CD4-positive, alpha-beta memory T cell (primary cell): ENCODE measurements at regions of chr6 and their contacts with region 1.

Region 1: GRCh38 chr6:133952815-133953633 is at the start of gene TBPL1:
- DNase-seq: peak; percentile 83 to 92 (median 84)
- H3K4me3 ChIP-seq: peak within 1 kb of the TSS; percentile 85 to 97
- H3K4me3 Mint-ChIP-seq: peak within 1 kb of the TSS; percentile 89 to 99 (median 97)
- H3K27ac ChIP-seq: peak within 1 kb of the TSS; percentile 65
- H3K27ac Mint-ChIP-seq: peak within 1 kb of the TSS; percentile 92 to 98 (median 96)
- H3K4me1 ChIP-seq: peaks cover 50% of the 10 kb centered on the region
- H3K4me1 Mint-ChIP-seq: peaks cover 37 to 55% (median 42%) of the 10 kb centered on the region in 4 donors
- H3K27me3 ChIP-seq: no peaks in the 10 kb centered on the region
- H3K27me3 Mint-ChIP-seq: no peaks in the 10 kb centered on the region
- total RNA-seq, gene TBPL1: 34.8 to 39.2 TPM

Region 2: DNA sequence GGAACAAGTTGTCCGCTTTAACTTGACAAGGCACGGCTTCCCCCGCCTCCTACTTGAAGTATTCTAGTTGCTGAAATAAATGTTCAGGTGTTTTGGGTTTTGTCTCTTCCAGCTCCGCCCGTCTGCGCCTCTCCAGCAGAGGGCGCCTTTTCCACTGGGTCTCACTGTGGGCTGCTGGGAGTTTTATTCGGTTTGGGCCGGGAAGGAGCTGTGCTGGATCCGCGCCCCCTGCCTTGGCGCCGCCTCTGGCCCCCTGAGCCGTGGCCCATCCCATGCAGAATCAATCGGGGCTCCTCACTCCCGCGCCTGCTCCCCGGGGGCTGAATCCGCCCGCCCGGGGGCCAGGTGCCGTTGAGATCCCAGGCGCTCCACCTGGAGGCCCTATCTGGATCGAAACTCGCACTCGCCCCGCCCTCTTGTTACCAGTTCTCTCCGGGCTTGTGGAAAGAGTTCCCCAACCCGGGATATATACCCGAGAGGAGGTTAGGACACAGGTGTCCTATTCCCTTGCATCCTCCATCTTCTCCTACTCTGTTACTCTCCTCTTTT is 115.1 kb before region 1 on chr6:
- CTCF ChIA-PET with region 1: no interaction called
- POLR2A ChIA-PET with region 1: no interaction called
- intact Hi-C with region 1: no loop called
- DNase-seq: peak in 4 of 5 donors; percentile 45 to 55 (median 50)
- H3K4me3 ChIP-seq: peak overlapping the region in 1 of 2 donors; percentile 39
- H3K4me3 Mint-ChIP-seq: peak overlapping the region; percentile 23 to 86 (median 68)
- H3K27ac ChIP-seq: no peak overlapping the region
- H3K27ac Mint-ChIP-seq: no peak overlapping the region
- H3K4me1 ChIP-seq: no peaks in the 10 kb centered on the region
- H3K4me1 Mint-ChIP-seq: peaks cover 0 to 8% (median 5%) of the 10 kb centered on the region in 4 donors
- H3K27me3 ChIP-seq: no peaks in the 10 kb centered on the region
- H3K27me3 Mint-ChIP-seq: peaks cover 11 to 20% of the 10 kb centered on the region in 2 donors

Region 3: DNA sequence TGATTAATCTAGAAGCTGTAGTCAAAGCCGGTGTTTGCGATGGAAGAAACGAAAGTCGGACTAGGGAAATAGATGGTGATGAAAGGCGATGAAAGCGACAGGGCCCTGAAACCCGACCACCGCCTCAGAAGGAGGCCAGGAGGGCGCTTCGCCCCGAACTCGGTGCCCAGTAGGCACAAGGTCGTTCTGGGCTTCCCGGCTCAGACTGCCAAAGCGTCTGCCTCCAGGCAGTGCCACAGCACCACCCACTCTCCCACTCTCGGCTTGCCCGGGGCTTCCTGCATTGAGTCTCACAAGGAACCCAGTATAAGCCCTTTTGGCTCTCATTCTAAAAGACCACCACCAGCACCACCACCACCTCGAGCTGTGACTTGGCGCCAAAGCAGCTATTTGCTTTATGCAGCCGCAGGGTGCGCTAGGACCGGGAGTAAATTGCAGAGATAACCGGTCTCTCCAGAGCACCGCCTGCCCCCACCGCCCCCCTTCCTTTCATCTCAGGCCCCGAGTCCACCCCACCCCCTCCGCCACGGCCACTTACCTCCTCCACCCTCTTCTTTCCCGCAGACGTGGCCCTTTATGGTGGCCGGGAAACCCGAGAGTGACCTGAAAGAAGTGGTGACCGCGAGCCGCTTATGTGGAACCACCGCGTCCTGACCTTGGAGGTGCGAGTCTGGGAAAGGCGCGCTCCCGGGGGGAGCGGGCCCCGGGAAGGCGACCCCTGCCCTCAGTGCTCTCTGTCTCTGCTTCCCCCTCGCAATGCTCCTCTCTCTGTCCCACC is 61.7 kb before region 1 on chr6:
- CTCF ChIA-PET with region 1: no interaction called
- POLR2A ChIA-PET with region 1: no interaction called
- intact Hi-C with region 1: no loop called
- DNase-seq: peak in 3 of 5 donors; percentile 9 to 18 (median 15)
- H3K4me3 ChIP-seq: peak overlapping the region; percentile 12 to 39
- H3K4me3 Mint-ChIP-seq: peak overlapping the region; percentile 67 to 85 (median 80)
- H3K27ac ChIP-seq: no peak overlapping the region
- H3K27ac Mint-ChIP-seq: peak overlapping the region in 1 of 7 donors; percentile 15
- H3K4me1 ChIP-seq: peaks cover 23% of the 10 kb centered on the region
- H3K4me1 Mint-ChIP-seq: peaks cover 27 to 53% (median 40%) of the 10 kb centered on the region in 4 donors
- H3K27me3 ChIP-seq: peaks cover 76% of the 10 kb centered on the region
- H3K27me3 Mint-ChIP-seq: peaks cover 74 to 75% of the 10 kb centered on the region in 2 donors

Region 4: DNA sequence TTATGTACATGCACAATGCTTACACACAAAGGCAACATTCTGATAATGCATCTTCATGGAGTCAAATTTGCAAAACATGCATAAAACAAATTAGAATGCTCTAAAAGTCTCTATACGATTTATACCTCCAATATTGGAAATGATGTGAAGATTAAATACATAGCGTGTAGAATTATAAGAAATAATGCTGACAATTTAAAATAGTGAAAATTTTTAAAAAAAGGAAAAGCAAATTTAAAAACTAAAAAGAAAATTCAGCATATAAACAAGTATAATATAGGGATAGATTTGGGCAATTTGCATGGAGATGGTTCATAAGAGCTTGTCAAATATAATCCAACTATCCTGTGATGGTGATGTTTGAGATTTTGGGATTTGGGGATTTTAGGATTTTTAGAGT is 49.2 kb before region 1 on chr6:
- CTCF ChIA-PET with region 1: no interaction called
- POLR2A ChIA-PET with region 1: no interaction called
- intact Hi-C with region 1: no loop called
- DNase-seq: no peak
- H3K4me3 ChIP-seq: no peak overlapping the region
- H3K4me3 Mint-ChIP-seq: no peak overlapping the region
- H3K27ac ChIP-seq: no peak overlapping the region
- H3K27ac Mint-ChIP-seq: no peak overlapping the region
- H3K4me1 ChIP-seq: no peaks in the 10 kb centered on the region
- H3K4me1 Mint-ChIP-seq: no peaks in the 10 kb centered on the region
- H3K27me3 ChIP-seq: peaks cover 22% of the 10 kb centered on the region
- H3K27me3 Mint-ChIP-seq: peaks cover 44 to 48% of the 10 kb centered on the region in 2 donors

Region 5: GRCh38 chr6:133966654-133967329 is 13.8 kb after region 1 on chr6:
- CTCF ChIA-PET with region 1: interaction called, 5 read pairs
- POLR2A ChIA-PET with region 1: interaction called, 10 read pairs
- intact Hi-C with region 1: no loop called
- DNase-seq: no peak
- H3K4me3 ChIP-seq: no peak overlapping the region
- H3K4me3 Mint-ChIP-seq: peak overlapping the region in 1 of 8 donors; percentile 7
- H3K27ac ChIP-seq: no peak overlapping the region
- H3K27ac Mint-ChIP-seq: peak overlapping the region in 5 of 7 donors; percentile 6 to 74 (median 24)
- H3K4me1 ChIP-seq: peaks cover 72% of the 10 kb centered on the region
- H3K4me1 Mint-ChIP-seq: peaks cover 47 to 78% (median 65%) of the 10 kb centered on the region in 4 donors
- H3K27me3 ChIP-seq: no peaks in the 10 kb centered on the region
- H3K27me3 Mint-ChIP-seq: no peaks in the 10 kb centered on the region

Region 6: GRCh38 chr6:133973109-133973971 is 20.3 kb after region 1 on chr6:
- CTCF ChIA-PET with region 1: interaction called, 37 read pairs
- POLR2A ChIA-PET with region 1: interaction called, 7 read pairs
- intact Hi-C with region 1: loop called (anchors 2 kb)
- DNase-seq: peak in 4 of 5 donors; percentile 38 to 46 (median 42)
- H3K4me3 ChIP-seq: no peak overlapping the region
- H3K4me3 Mint-ChIP-seq: no peak overlapping the region
- H3K27ac ChIP-seq: no peak overlapping the region
- H3K27ac Mint-ChIP-seq: peak overlapping the region in 4 of 7 donors; percentile 11 to 66 (median 18)
- H3K4me1 ChIP-seq: peaks cover 37% of the 10 kb centered on the region
- H3K4me1 Mint-ChIP-seq: peaks cover 31 to 45% (median 38%) of the 10 kb centered on the region in 4 donors
- H3K27me3 ChIP-seq: no peaks in the 10 kb centered on the region
- H3K27me3 Mint-ChIP-seq: no peaks in the 10 kb centered on the region

Region 7: DNA sequence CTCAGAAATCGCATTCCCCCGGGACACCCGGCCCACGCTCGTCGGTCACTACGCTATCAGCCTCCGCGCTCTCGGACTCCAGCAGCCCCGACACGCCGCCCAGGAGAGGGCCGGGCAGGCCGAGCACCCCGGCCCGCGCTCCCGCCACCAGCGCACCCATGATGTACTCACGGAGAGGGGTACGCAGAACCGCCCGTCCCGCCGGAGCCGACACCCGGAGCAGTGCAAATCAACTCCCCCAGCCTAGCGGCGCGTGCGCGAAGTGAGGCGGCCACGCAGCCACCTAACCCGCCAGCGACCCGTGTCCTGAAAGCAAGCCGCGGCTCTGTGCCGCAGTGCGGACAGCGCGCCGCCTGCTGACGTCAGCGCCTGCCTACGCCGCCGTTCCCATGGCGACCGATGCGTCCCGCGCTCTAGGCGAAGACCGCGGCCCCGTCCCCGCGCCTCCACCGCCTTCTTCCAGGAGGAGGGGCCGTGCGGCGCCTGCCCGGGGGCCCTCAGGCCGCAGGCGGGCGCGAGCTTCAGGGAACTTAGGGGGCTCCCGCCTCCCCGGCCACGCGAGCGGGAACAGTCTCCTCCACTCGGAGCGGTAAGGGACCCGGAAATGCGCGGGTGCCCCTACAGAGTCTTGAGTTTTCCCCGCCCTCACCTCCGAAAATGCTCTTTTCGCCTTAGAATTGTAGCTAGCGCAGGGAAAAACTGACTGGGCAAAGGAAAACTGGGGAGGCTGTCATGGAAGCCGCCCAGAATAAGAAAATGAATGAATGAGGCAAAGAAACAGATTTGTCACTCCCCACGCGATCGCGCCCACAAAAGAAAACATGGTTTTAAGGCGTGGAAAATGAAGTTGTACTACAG is 1544.6 kb after region 1 on chr6 and contains the start of gene AHI1:
- CTCF ChIA-PET with region 1: no interaction called
- POLR2A ChIA-PET with region 1: no interaction called
- intact Hi-C with region 1: loop called (anchors 10 kb)
- DNase-seq: peak; percentile 86 to 92 (median 89)
- H3K4me3 ChIP-seq: peak within 1 kb of the TSS; percentile 32 to 97
- H3K4me3 Mint-ChIP-seq: peak within 1 kb of the TSS in 3 of 8 donors; percentile 29 to 95 (median 59)
- H3K27ac ChIP-seq: peak within 1 kb of the TSS; percentile 87
- H3K27ac Mint-ChIP-seq: peak within 1 kb of the TSS in 3 of 7 donors; percentile 21 to 69 (median 28)
- H3K4me1 ChIP-seq: peaks cover 15% of the 10 kb centered on the region
- H3K4me1 Mint-ChIP-seq: peaks cover 5 to 9% (median 6%) of the 10 kb centered on the region in 4 donors
- H3K27me3 ChIP-seq: no peaks in the 10 kb centered on the region
- H3K27me3 Mint-ChIP-seq: no peaks in the 10 kb centered on the region
- total RNA-seq, gene AHI1: 12.2 to 12.8 TPM